Dorsolateral prefrontal cortex (tissue), 120 donors: ENCODE measurements at regions of chr2 and their contacts with region 1.

Region 1: GRCh38 chr2:218269899-218270720 is at the starts of genes AAMP and PNKD:
- DNase-seq: peak; percentile 100
- H3K4me3 ChIP-seq: peak within 1 kb of the TSS; percentile 70 to 100 (median 96)
- H3K27ac ChIP-seq: peak within 1 kb of the TSS in 58 of 59 donors; percentile 20 to 93 (median 86)
- H3K27me3 ChIP-seq: no peaks in the 10 kb centered on the region
- CTCF ChIP-seq: peak in 53 of 56 donors; percentile 9 to 68 (median 41)
- total RNA-seq, gene AAMP: 61.1 to 104 (median 82.4) TPM
- total RNA-seq, gene PNKD: 74.2 to 179 (median 130) TPM

Region 2: GRCh38 chr2:218216674-218217359 is 53.3 kb before region 1 on chr2 and contains the start of gene ARPC2:
- intact Hi-C with region 1: loop called (anchors 2 kb)
- DNase-seq: peak; percentile 85 to 94 (median 92)
- H3K4me3 ChIP-seq: peak within 1 kb of the TSS; percentile 49 to 98 (median 89)
- H3K27ac ChIP-seq: peak within 1 kb of the TSS; percentile 72 to 98 (median 92)
- H3K27me3 ChIP-seq: no peaks in the 10 kb centered on the region
- CTCF ChIP-seq: peak in 33 of 56 donors; percentile 6 to 54 (median 31)
- total RNA-seq, gene ARPC2: 85.6 to 183 (median 139) TPM

Region 3: DNA sequence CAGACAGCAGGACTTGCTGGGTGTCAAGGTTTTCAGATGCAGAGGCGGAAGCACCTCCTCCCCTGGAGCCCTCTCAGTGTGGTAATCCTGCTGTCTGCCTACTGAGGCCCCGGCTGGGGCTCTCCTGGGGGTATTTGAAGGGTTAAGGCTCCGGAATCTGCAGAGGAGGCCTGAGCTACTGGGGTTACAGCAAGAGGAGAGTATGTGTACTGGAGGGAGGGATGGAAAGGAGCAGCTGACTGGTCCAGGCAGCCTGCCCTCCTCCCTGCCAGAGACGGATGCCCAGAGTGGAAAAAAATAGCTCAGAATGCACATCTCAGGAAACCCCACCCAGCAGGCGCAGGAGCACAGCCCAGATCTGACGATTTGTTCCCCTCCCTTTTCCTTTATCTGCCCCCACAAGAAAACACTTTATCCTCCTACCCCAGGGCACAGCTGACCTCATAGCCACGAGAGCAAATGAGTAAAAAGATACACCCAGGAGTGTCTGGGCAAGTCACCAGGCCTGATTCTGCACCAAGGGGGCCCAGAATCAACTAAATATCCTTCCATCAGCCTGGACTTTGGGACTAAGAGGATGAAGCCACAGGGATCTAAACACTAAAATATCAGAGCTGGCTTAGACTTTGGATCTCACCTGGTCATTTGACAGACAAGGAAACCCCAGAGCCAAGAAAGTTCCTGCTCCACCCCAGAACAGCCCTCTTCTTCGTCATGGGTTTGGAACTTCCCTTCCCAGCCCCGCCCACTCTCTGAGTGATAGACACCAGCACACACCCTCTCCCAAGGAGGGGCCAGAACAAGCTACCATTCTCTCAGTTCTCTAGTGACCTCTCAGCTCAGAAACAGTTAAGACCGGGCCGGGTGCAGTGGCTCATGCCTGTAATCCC is 16.7 kb after region 1 on chr2:
- intact Hi-C with region 1: loop called in 1 of 2 experiments (anchors 2 kb)
- DNase-seq: peak; percentile 58 to 90 (median 84)
- H3K4me3 ChIP-seq: peak overlapping the region; percentile 37 to 78 (median 63)
- H3K27ac ChIP-seq: peak overlapping the region; percentile 31 to 100 (median 97)
- H3K27me3 ChIP-seq: no peaks in the 10 kb centered on the region
- CTCF ChIP-seq: peak in 15 of 56 donors; percentile 7 to 46 (median 21)

Region 4: DNA sequence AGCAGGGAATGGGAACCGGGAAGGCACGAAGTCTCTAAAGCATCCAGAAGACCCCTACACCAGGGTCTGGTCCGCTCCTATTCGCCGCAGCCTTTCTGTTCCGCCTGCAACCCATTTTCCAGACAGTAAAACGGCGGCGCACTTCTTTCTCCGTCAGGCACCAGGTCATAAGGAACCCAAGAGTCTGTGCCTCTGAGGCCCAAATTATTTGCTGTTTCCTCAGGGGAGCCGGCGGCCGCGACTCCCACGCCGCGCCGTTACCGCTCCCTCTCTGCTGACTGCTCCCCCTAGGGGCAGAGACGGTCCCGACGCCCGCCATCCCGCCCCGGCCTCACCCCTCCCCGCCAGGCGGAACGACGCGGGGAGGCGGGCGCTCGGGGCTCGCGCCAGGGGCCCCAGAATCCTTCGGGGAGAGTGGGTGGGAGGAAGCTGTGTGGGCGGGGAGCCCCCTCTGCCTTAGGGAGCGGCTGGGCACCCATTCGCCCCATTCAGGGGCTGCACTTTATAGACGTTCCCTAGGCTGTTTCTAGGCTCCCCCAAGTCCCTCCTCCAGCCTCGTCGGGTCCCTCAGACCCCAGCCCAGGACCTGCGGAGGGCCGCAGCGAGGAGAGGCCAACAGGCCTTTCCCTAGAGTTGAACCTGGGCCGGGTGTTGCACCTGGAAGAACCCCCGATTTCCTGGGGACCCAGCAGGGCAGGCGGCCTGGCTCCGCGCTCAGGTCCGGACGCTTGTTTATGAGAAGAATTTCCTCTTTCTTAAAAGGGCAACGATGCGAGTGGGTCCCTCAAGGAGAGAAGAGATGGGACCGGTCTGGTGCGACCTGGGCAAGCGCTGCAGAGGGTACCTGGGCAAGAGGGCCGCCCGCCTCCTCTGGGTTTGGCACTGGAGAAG is 125.9 kb after region 1 on chr2:
- intact Hi-C with region 1: loop called (anchors 2 to 5 kb)
- DNase-seq: peak; percentile 84 to 96 (median 92)
- H3K4me3 ChIP-seq: peak overlapping the region; percentile 62 to 99 (median 94)
- H3K27ac ChIP-seq: peak overlapping the region; percentile 91 to 100 (median 99)
- H3K27me3 ChIP-seq: peaks cover 0 to 5% (median 0%) of the 10 kb centered on the region in 45 donors
- CTCF ChIP-seq: peak; percentile 66 to 98 (median 91)

Region 5: DNA sequence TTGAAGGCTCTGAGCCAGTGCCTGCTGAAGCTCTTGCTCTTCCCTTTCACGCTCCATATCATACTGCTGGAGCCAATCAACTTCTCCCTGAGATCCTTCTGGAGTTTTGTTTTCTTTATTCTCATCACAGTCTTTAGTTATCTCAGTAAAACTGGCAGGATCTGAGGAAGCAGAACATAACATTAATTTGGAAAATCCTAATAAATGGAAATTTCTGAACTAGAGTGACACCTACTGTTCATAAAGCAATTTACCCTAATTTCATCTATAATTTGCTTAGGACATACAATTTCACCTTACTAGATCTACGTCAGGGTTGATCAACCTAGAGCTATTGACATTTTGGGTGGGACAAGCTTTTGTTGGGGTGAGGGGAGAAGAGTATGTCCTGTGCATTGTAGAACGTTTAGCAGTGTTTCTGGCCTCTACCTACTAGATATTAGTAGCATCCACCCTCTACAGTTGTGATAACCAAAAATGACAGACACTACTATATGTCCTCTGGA is 196.0 kb after region 1 on chr2:
- intact Hi-C with region 1: loop called (anchors 5 to 10 kb)
- DNase-seq: no peak
- H3K4me3 ChIP-seq: no peak overlapping the region
- H3K27ac ChIP-seq: peak overlapping the region in 2 of 59 donors; percentile 39 to 40
- H3K27me3 ChIP-seq: no peaks in the 10 kb centered on the region
- CTCF ChIP-seq: peak in 55 of 56 donors; percentile 22 to 76 (median 54)

Region 6: GRCh38 chr2:218568190-218569037 is 298.3 kb after region 1 on chr2 and contains the starts of genes CNOT9 and USP37:
- intact Hi-C with region 1: loop called (anchors 5 kb)
- DNase-seq: peak; percentile 98 to 99 (median 99)
- H3K4me3 ChIP-seq: peak within 1 kb of the TSS; percentile 69 to 99 (median 92)
- H3K27ac ChIP-seq: peak within 1 kb of the TSS; percentile 65 to 98 (median 93)
- H3K27me3 ChIP-seq: no peaks in the 10 kb centered on the region
- CTCF ChIP-seq: peak in 10 of 56 donors; percentile 4 to 32 (median 18)
- total RNA-seq, gene CNOT9: 27.4 to 52.0 (median 37.4) TPM
- total RNA-seq, gene USP37: 15.0 to 42.8 (median 26.7) TPM

Region 7: GRCh38 chr2:218648088-218648786 is 378.1 kb after region 1 on chr2:
- intact Hi-C with region 1: loop called in 1 of 2 experiments (anchors 10 kb)
- DNase-seq: peak in 6 of 10 donors; percentile 30 to 65 (median 56)
- H3K4me3 ChIP-seq: no peak overlapping the region
- H3K27ac ChIP-seq: no peak overlapping the region
- H3K27me3 ChIP-seq: no peaks in the 10 kb centered on the region
- CTCF ChIP-seq: peak; percentile 44 to 85 (median 74)